Left colon (tissue), 2 donors: ENCODE measurements at regions of chr19 and their contacts with region 1.

Region 1: GRCh38 chr19:56252699-56253422 is 19.7 kb upstream of the EDDM13 start:
- DNase-seq: peak; percentile 68 to 85
- ATAC-seq: peak; percentile 96

Region 2: DNA sequence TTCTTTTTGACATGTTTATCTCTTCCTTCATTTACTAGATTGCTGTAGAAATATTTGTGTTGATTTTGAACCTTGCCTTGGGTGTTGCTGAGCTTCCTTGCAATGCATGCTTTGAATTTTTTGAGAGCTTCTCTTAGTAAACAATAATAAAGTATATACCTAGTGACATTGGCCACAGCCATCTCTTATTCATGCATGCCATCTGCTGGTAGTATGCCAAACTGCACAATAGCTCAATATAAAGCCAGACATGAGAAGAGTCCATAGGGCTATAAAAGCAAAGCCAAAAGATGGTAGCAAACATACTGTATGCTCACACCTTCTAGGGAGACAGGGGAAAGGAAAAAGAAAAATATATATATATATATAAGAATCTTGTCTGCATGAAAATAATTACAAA is 80.6 kb after region 1 on chr19:
- intact Hi-C with region 1: loop called in 1 of 2 experiments (anchors 5 kb)
- DNase-seq: peak in 1 of 2 donors; percentile 64
- ATAC-seq: peak; percentile 92

Region 3: GRCh38 chr19:56350416-56351045 is 97.7 kb after region 1 on chr19:
- intact Hi-C with region 1: loop called in 1 of 2 experiments (anchors 5 kb)
- DNase-seq: peak in 1 of 2 donors; percentile 36
- ATAC-seq: no peak